AG04449 (cell line): ENCODE measurements at regions of chr2 and their contacts with region 1.

Region 1: DNA sequence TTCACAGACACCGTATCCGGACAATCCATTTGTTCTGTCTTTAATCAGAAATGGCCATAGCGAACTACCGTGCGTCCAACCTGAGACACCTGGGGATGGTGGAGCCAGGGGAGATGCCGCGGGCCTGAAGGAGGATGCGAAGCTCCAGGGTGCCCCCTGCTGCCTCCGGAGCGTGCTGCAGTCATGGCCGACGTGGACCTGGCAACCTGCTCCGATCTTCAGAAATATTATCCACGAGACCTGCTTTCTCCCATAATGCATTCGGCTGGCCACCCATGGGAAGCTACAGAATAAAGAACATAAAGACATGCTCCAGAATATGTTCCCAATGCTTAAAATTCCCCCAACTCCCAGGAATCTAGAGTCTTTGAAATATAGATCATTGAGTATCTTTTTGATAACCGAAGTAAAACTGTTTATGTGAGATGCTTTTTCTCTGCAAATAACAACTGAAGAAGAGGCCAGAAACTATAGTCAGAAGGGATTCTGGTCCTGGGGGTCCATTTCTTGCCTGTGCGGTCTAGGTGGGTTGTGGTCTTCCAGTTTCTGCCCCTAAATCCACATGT is 30.7 kb upstream of the SLC66A3 start:
- DNase-seq: no peak
- H3K4me3 ChIP-seq: no peak overlapping the region
- CTCF ChIP-seq: peak; percentile 97

Region 2: DNA sequence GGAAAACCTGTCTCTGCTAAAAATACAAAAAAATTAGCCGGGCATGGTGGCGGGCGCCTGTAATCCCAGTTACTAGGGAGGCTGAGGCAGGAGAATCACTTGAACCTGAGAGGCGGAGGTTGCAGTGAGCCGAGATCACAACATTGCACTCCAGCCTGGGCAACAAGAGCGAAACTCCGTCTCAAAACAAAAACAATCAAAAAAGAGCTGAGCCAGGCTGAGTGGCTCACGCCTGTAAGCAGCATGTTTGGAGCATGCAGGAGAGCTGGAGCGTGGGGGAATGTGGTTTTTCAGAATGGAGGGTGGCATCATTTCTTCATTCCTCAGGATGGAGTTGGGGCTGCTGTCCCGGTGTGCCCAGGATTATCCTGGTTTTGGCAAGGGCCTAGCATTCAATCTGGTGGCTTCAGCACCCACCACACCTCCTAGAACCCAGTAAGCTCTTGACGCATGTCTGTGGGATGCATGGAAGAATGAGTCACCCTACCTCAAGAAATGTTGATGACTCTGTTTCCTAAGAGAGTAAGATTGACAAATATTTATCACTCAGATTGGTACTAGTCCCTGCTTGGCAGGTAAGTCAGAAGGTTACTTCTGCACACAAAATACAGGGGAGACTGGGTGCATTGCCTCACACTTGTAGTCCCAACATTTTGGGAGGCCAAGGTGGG is 586.2 kb before region 1 on chr2:
- CTCF ChIA-PET with region 1: no interaction called
- POLR2A ChIA-PET with region 1: no interaction called
- DNase-seq: no peak
- H3K4me3 ChIP-seq: no peak overlapping the region
- CTCF ChIP-seq: no peak

Region 3: GRCh38 chr2:10750610-10751009 is 374.0 kb before region 1 on chr2:
- CTCF ChIA-PET with region 1: no interaction called
- POLR2A ChIA-PET with region 1: no interaction called
- DNase-seq: no peak
- H3K4me3 ChIP-seq: no peak overlapping the region
- CTCF ChIP-seq: no peak

Region 4: GRCh38 chr2:10821296-10821695 is 303.3 kb before region 1 on chr2:
- CTCF ChIA-PET with region 1: interaction called, 17 read pairs
- POLR2A ChIA-PET with region 1: no interaction called
- DNase-seq: no peak
- H3K4me3 ChIP-seq: no peak overlapping the region
- CTCF ChIP-seq: no peak

Region 5: DNA sequence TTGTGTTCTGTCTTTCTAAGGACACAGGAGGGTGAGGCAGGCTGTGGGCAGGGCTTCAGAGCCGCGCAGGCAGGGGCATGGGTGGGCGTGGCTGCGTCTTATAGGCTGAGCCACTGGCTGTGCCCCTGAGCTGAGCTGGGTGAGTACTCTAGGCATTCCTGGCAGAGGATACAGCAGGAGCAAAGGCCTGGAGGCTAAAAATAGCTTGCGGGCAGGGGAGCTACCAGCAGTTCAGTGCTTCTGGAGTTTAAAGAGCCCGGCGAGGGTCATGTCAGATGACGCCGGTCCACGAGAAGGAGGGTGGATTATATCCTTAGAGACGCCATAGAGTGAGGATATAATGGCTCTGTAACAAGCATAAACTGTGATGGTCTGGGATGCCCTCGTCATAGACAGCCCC is 280.5 kb before region 1 on chr2:
- CTCF ChIA-PET with region 1: interaction called, 609 read pairs
- POLR2A ChIA-PET with region 1: no interaction called
- DNase-seq: no peak
- H3K4me3 ChIP-seq: no peak overlapping the region
- CTCF ChIP-seq: no peak

Region 6: DNA sequence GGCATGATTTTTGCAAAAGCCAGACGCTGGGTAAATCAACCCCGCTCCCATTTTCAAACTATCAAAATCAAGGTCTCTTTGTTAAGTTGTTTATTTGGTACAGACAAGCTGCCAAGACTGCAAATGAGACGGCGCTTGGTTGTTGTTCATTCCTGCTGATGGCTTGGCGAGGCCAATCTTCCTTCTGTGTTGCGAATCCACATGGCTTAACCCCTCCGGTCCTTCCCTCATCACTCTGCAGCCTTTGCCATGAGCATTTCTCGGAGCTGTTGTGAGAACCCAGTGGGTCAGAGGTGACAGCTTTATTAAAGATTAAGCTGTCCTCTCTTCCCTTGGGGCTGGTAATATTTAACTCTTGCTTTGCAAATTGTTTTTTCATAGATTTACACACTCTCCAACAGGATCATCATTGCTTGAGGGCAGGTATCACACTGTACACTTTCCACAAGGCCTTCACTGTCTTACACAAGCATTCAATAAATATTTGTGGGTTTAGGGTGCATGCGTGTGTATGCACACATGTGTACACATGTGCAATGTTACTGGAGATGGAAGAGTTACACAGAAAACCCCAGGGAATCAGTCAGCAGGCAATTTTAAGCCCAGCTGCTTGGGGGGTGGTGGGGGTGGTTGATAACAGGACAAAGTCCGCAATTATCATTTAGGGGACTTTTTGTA is 240.6 kb before region 1 on chr2:
- CTCF ChIA-PET with region 1: interaction called, 10 read pairs
- POLR2A ChIA-PET with region 1: no interaction called
- DNase-seq: no peak
- H3K4me3 ChIP-seq: no peak overlapping the region
- CTCF ChIP-seq: no peak

Region 7: GRCh38 chr2:10900216-10901109 is 224.1 kb before region 1 on chr2:
- CTCF ChIA-PET with region 1: interaction called, 10 read pairs
- POLR2A ChIA-PET with region 1: no interaction called
- DNase-seq: no peak
- H3K4me3 ChIP-seq: no peak overlapping the region
- CTCF ChIP-seq: peak; percentile 42

Region 8: DNA sequence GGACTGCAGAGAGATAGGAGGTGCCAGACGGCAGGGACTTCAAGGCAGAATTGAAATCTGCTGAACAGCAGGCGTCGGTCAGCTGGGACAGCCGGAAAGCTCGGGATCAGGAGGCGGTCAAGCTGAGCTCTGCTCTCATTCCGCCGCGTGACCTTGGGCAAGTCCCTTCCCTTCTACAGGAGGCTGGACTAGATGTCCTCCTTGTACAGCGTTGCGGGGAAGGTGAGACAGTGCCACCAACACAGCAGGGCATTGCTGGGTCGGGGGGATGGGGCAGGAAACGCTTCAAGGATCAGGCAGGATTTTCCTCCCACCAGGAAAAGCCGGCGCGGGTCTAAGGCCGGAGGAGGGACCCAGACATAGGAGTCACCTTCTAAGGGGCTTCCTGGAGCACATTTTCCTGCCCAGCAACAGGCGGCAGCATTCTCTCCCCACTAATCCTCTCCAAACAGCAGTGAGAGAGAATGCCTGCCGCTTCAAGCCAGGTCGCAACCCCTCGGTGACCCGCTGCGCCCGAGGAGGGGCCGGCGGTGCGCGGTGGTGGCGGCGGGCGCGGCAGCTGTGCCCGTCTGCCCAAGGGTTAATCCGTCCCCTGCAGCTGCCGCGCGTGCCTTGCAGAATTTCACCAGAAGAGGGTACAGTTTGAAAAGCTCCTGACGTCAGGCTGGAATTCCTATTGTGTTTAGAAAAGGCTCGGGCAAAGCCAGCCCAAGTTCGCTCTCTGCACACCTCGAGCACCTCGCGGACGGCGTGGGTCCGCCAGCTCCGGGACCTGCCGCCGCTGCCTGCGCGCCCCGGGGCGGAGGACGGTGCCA is 213.1 kb before region 1 on chr2 and contains the start of gene KCNF1:
- CTCF ChIA-PET with region 1: interaction called, 42 read pairs
- POLR2A ChIA-PET with region 1: no interaction called
- DNase-seq: no peak
- H3K4me3 ChIP-seq: peak within 1 kb of the TSS; percentile 45
- CTCF ChIP-seq: peak; percentile 38

Region 9: DNA sequence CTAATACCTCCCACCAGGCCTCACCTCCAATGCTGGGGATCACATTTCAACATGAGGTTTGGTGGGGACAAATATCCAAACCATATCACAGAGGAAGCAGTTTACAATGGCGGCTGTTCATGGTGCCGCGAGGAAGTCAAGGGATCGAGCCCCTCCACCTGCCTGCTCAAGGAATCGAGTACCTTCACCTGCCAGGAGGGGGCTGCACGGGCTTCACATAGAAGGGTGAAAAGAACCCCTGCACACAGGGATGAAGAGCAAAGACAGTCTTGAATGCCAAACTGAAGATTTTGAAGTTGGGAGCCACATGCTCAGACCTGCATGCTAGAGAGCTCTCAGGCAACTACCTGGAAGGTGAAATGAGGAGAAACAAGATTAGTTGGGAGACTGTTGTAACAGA is 102.5 kb before region 1 on chr2:
- CTCF ChIA-PET with region 1: no interaction called
- POLR2A ChIA-PET with region 1: no interaction called
- DNase-seq: no peak
- H3K4me3 ChIP-seq: no peak overlapping the region
- CTCF ChIP-seq: no peak

Region 10: DNA sequence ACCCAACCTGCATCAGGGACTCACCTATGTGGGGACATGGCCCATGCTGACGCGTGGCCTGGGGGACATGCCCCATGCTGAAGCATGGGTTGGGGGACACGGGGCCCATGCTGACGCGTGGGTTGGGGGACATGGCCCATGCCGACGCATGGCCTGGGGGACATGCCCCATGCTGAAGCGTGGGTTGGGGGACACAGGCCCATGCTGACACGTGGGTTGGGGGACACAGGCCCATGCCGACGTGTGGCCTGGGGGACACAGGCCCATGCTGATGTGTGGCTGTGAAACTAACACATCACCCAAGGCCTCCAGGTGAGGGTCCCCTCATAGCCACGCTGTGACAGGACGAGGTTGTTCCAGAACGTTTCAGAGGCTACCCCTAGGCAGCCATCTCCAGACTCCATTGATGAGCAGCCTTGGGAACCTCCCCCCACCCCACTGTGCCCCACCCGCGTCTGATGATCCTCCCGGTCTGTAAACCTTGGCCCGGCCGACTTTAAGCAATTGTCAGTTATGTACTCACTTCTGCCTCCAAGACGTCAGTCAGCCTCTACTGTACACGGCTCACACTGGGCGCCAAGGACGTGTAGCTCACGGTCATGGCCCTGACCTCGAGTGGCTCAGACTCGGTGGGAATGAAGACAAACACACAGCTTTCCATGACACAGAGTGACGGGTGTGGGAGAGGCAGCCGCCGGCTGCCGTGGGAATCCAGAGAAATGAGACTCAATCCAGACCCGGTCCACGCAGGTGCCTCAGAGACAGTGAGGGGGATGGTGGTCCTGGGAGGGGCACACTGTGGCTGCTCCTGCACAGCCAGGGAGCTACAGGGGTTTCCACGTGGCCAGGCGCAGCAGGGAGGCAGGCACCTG is 19.6 kb before region 1 on chr2:
- CTCF ChIA-PET with region 1: interaction called, 18 read pairs
- POLR2A ChIA-PET with region 1: no interaction called
- DNase-seq: no peak
- H3K4me3 ChIP-seq: no peak overlapping the region
- CTCF ChIP-seq: no peak